BJ (cell line): ENCODE measurements at regions of chr3 and their contacts with region 1.

Region 1: DNA sequence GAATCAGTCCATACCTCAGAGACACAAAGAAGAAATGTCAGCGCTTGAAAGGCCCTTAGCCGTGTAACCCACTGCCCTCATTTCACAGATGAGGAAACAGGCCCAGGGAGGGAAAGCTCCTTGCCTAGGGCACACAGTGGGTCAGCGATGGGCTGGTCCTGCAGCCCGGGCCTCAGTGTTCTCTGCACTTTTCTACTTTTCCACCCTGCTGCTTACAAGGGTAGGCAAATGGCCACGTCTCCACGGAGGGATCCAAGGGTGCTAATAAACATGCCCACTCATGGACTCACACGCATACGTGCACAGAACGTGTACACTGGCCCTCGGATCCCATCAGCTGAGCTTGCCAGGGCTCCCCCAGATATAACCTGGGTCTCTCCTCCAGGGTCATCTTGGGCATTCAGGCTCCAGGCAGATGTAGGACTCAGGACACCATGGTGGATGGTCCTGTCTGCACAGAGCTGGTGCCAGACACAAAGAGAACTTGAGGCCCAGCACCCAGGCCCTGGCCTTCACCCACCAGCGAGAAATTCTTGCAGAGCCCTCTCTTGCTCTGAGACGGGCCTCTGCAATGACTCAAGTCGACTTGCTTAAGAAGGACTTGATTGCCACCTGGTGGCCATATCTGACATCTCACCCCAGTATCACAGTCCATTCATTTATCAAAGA is 34.5 kb upstream of the VPS8 start:
- DNase-seq: peak; percentile 50
- H3K4me3 ChIP-seq: no peak overlapping the region
- H3K27me3 ChIP-seq: peaks cover 3% of the 10 kb centered on the region
- CTCF ChIP-seq: peak; percentile 72

Region 2: DNA sequence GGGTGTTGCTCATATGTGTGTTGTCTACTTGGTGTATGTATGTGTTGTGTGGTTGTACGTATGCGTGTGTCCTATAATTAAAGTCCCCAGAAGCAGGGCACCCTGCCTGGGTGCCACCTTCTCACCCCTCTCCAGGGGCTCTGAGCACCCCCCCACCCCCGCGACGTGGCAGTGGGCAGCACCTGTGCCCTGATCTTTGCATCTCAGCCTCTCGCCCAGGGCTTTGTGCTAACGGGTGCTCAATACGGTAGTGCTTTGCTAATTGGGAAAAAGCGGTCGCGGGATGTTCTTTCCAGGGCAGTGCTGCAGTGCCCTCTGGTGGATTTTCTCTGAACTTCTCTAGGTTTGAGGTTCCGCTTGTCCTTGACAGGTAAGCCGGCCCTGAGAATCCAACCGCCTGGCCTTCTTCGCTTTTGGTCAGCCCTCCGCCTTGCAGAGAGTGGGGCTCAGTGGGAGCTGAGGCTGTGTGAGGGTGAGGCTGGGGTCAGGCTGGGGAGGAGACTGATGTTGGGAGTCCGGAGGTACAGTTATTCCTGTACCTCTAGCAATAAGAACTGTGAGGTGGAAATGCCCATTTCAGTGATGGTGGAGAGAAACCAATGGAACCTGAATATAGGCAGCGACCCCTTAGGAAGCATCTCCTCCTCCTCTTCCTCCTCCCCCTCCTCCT is 233.5 kb before region 1 on chr3:
- CTCF ChIA-PET with region 1: interaction called, 21 read pairs
- POLR2A ChIA-PET with region 1: no interaction called
- DNase-seq: no peak
- H3K4me3 ChIP-seq: no peak overlapping the region
- H3K27me3 ChIP-seq: peaks cover 11% of the 10 kb centered on the region
- CTCF ChIP-seq: peak; percentile 80

Region 3: GRCh38 chr3:184561061-184561912 is 216.2 kb before region 1 on chr3 and contains the start of gene EPHB3:
- CTCF ChIA-PET with region 1: interaction called, 20 read pairs
- POLR2A ChIA-PET with region 1: interaction called, 3 read pairs
- DNase-seq: peak; percentile 95
- H3K4me3 ChIP-seq: peak within 1 kb of the TSS; percentile 71
- H3K27me3 ChIP-seq: peaks cover 11% of the 10 kb centered on the region
- CTCF ChIP-seq: peak; percentile 99
- polyA plus RNA-seq, gene EPHB3: 1.1 and 3.3 TPM in 2 replicates

Region 4: GRCh38 chr3:184740524-184741484 is 36.7 kb before region 1 on chr3:
- CTCF ChIA-PET with region 1: interaction called, 11 read pairs
- POLR2A ChIA-PET with region 1: interaction called, 4 read pairs
- DNase-seq: no peak
- H3K4me3 ChIP-seq: no peak overlapping the region
- H3K27me3 ChIP-seq: no peaks in the 10 kb centered on the region; the same call in 1 of the 2 replicates
- CTCF ChIP-seq: no peak

Region 5: GRCh38 chr3:184800349-184800930 is 23.0 kb after region 1 on chr3:
- CTCF ChIA-PET with region 1: interaction called, 37 read pairs
- POLR2A ChIA-PET with region 1: no interaction called
- DNase-seq: no peak
- H3K4me3 ChIP-seq: no peak overlapping the region
- H3K27me3 ChIP-seq: peaks cover 2% of the 10 kb centered on the region
- CTCF ChIP-seq: no peak